GM23248 (cell line): ENCODE measurements at regions of chr14 and their contacts with region 1.

Region 1: DNA sequence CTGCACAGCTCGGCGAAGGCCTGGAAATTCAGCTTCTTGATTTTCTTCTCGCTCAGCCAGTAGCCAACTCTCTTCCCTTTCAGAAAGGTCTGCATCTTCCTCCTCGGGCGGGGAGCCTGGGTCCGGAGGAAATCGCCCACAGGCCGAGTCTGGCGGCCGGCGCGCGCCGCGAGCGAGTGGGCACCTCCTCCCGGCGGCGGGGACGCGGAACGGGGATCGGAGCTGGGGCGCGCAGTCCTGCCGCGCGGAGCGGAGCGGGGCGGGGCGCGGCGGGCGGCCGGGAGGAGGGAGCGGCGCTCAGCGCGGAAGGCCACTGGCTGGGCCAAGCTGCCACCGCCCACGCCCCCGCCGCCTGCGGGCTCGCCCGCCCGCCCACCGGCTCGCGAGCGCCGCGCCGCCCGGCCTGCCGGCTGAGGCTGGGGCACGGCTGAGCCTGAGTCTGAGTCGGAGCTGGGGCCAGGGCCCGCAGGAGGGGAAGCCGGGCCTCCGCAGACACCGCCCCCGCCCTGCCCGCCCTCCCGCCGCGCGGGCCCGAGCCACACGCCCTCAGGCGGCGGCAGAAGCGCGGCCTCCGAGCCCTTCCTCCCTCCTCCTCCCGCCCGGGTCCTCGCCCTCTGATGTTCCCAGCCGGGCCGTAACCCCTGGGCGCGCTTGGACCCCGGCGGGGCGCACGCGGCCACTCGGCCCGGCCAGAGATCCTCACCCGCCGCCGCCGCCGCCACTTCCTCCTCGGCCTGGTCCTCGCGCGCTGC is 480 bp downstream of the ITPK1 start:
- DNase-seq: peak; percentile 93
- H3K4me3 ChIP-seq: peak overlapping the region; percentile 84
- H3K27ac ChIP-seq: peak overlapping the region; percentile 68
- H3K4me1 ChIP-seq: peaks cover 14% of the 10 kb centered on the region
- H3K27me3 ChIP-seq: no peaks in the 10 kb centered on the region

Region 2: GRCh38 chr14:92973261-92973797 is 141.9 kb before region 1 on chr14:
- in situ Hi-C with region 1: loop called (anchors 10 kb)
- DNase-seq: peak; percentile 96
- H3K4me3 ChIP-seq: 0 out of 2 replicates have a peak overlapping the region, but pooled peaks have one; percentile 12
- H3K27ac ChIP-seq: peak overlapping the region; percentile 75
- H3K4me1 ChIP-seq: peaks cover 16% of the 10 kb centered on the region
- H3K27me3 ChIP-seq: no peaks in the 10 kb centered on the region

Region 3: GRCh38 chr14:93281937-93282336 is 166.7 kb after region 1 on chr14:
- in situ Hi-C with region 1: no loop called
- DNase-seq: no peak
- H3K4me3 ChIP-seq: no peak overlapping the region
- H3K27ac ChIP-seq: no peak overlapping the region
- H3K4me1 ChIP-seq: peaks cover 10% of the 10 kb centered on the region; the same call in 1 of the 2 replicates
- H3K27me3 ChIP-seq: no peaks in the 10 kb centered on the region